PC-9 (cell line): ENCODE measurements at regions of chr9 and their contacts with region 1.

Region 1: GRCh38 chr9:108761655-108762347 is 94.0 kb downstream of the ACTL7B start:
- DNase-seq: peak in 1 of 2 experiments; percentile 56
- H3K4me3 ChIP-seq: no peak overlapping the region
- H3K27ac ChIP-seq: no peak overlapping the region
- H3K4me1 ChIP-seq: no peaks in the 10 kb centered on the region
- H3K27me3 ChIP-seq: no peaks in the 10 kb centered on the region
- CTCF ChIP-seq: peak; percentile 92

Region 2: DNA sequence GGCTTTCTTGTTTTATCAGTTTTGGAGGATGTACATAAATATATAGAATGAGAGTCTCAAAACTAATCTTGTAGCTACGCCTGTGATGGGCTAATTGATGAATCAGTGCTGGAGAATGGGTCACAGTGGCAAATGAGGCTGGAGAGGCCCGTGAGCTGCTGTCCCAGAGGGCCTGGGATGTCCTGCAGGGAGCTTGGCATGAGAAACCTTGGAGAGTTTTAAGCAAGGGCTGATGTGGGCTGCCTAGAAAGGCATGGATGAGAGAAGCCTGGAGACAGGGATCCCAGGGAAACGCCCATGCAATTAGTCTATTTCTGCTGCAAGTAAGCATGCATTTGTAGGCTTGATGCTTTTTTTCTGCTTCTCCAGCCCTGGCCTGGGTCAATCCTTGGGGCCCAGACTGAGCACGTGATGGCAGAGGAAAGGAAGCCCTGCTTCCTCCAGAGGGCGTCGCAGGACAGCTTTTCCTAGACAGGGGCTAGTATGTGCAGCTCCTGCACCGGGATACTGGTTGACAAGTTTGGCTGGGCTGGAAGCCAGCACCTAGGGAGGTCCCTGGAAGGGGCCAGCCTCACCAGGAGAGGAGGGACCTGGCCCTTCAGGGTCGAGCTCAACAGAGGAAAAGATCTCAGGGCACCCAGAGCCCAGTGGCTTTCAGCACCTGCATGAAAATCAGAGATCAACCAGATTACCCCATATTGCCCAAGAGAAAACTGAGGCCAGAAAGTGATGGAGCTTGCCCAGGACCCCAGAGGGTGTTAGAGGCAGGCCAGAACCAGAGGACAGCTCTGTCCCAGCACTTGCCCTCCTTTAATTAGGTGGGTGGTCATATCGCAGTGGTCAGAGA is 1339.6 kb before region 1 on chr9:
- CTCF ChIA-PET with region 1: interaction called, 4 read pairs
- POLR2A ChIA-PET with region 1: no interaction called
- intact Hi-C with region 1: loop called (anchors 1 kb)
- DNase-seq: peak; percentile 65 to 79
- H3K4me3 ChIP-seq: no peak overlapping the region
- H3K27ac ChIP-seq: no peak overlapping the region
- H3K4me1 ChIP-seq: no peaks in the 10 kb centered on the region
- H3K27me3 ChIP-seq: no peaks in the 10 kb centered on the region
- CTCF ChIP-seq: peak; percentile 88

Region 3: DNA sequence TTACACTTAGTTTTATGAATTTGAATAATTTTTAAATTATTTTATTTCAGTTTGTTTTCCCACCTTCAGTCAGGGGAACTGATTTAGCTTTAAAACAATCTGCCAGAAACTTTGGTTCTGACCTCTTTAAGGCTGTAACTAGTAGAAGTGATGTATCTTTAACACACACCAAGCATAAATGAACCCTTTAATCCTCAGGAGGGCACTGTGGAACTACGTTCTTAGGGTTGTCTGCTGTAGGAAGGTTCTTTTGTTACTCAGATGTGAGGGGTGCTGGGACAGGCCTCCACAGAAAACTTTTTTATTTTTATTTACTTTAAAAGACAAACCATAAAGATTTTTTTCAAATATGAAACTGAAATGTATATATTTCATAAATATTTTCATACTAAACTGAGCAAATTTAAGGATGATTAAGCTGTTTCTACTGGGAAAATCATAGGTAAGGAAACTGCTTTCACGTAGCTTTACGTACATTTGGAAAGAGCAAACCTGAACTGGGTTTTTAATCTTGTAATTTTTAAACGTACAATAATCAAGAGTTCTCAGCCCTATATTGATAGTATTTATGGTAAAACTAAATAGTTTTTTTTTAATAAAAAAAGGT is 1277.6 kb before region 1 on chr9:
- CTCF ChIA-PET with region 1: no interaction called
- POLR2A ChIA-PET with region 1: no interaction called
- intact Hi-C with region 1: loop called (anchors 1 kb)
- DNase-seq: peak; percentile 42 to 65
- H3K4me3 ChIP-seq: peak overlapping the region; percentile 100; the same call in 1 of the 2 replicates
- H3K27ac ChIP-seq: 0 out of 2 replicates have a peak overlapping the region, but pooled peaks have one; percentile 50
- H3K4me1 ChIP-seq: peaks cover 45% of the 10 kb centered on the region
- H3K27me3 ChIP-seq: no peaks in the 10 kb centered on the region
- CTCF ChIP-seq: peak; percentile 72

Region 4: GRCh38 chr9:108374626-108375025 is 387.2 kb before region 1 on chr9:
- CTCF ChIA-PET with region 1: no interaction called
- POLR2A ChIA-PET with region 1: no interaction called
- intact Hi-C with region 1: no loop called
- DNase-seq: peak in 1 of 2 experiments; percentile 57
- H3K4me3 ChIP-seq: no peak overlapping the region
- H3K27ac ChIP-seq: peak overlapping the region; percentile 38
- H3K4me1 ChIP-seq: peaks cover 20% of the 10 kb centered on the region
- H3K27me3 ChIP-seq: no peaks in the 10 kb centered on the region
- CTCF ChIP-seq: no peak

Region 5: DNA sequence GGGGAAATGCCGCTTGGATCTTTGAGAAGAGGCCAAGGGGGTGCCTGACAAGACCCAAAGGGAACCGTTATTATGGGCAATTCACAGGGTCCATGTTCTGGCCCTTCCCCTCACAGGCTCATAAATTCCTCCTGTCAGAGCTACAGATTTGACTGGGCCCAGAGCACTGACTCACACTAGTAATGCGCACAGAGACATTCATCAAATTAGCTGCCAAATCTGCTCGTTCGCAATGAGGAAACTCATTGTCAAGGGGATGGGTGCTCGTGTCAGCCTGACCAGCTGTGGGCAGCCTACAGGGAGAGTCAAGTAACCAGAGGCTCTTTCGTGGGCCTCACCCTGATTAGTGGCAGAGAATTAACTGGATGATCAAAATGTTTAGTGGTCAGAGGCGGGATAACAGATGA is 283.4 kb before region 1 on chr9:
- CTCF ChIA-PET with region 1: no interaction called
- POLR2A ChIA-PET with region 1: no interaction called
- intact Hi-C with region 1: loop called (anchors 10 kb)
- DNase-seq: peak; percentile 57 to 93
- H3K4me3 ChIP-seq: no peak overlapping the region
- H3K27ac ChIP-seq: peak overlapping the region; percentile 87
- H3K4me1 ChIP-seq: peaks cover 48% of the 10 kb centered on the region
- H3K27me3 ChIP-seq: no peaks in the 10 kb centered on the region
- CTCF ChIP-seq: no peak

Region 6: DNA sequence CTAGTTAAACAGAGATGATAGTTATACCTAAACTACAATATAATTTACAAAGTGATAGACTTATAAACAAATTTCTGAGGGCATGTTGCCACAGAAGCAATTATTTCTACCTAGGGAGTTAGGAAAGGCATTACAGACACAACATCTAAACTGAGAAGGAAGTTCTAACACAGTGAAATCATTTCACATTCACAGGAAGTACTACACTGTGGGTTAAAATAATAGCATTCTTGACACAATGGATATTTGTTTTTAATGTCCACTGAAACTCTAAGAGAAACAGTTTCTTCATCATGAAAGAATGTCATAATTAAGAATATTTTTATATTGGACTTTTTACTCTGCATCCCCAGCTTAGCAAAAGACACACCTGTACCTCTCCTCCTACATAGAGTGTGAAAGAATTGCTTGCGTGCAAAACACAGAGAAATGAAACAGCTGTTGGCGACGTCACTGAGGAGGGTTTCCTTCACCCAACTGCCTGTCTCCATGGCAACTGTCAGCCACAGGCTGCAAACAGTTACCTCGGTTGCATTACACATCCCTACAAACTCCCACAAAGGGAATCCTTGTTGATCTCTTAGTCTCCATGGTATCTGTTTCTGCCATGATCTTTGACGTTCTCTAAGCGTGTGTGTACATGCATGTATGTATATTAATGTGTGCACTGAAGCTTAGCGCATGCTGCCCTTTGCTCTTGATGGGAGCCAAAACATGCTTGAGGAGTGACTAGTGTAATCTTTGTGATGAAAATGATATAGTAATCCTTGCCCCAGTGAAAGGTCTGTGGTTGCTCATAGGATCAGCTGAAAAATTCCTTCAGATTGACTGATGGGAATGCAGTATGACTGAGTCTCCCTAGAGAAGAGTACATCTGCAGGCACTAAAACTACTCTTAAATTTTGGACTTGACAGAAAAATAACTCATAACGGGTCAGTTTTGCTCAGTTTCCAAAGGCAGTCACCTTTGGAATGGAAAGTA is 74.5 kb before region 1 on chr9:
- CTCF ChIA-PET with region 1: no interaction called
- POLR2A ChIA-PET with region 1: no interaction called
- intact Hi-C with region 1: loop called (anchors 5 kb)
- DNase-seq: no peak
- H3K4me3 ChIP-seq: no peak overlapping the region
- H3K27ac ChIP-seq: no peak overlapping the region
- H3K4me1 ChIP-seq: peaks cover 16% of the 10 kb centered on the region
- H3K27me3 ChIP-seq: no peaks in the 10 kb centered on the region
- CTCF ChIP-seq: no peak

Region 7: DNA sequence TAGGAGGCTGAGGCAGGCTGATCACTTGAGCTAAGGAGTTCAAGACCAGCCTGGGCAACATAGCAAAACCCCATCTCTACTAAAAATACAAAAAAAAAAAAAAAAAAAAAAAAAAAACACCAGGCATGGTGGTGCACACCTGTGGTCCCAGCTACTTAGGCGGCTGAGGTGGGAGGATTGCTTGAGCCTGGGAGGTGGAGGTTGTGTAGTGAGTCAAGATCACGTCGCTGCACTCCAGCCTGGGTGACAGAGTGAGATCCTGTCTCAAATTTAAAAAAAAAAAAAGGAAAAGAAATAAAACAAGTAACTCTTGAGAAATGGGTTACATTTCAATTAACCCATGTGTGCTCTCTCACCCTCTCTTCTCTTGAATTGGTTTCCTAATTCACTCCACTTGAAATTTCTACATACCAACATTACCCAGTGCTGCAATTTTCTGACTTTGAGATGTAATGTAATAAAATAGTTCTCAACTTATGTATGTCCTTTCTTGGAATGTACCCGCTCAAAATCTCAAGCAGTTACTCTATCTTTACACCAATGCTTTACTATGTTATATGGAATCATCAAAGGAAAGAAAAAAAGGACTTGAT is 322.1 kb after region 1 on chr9:
- CTCF ChIA-PET with region 1: no interaction called
- POLR2A ChIA-PET with region 1: no interaction called
- intact Hi-C with region 1: no loop called
- DNase-seq: no peak
- H3K4me3 ChIP-seq: no peak overlapping the region
- H3K27ac ChIP-seq: no peak overlapping the region
- H3K4me1 ChIP-seq: peaks cover 23% of the 10 kb centered on the region
- H3K27me3 ChIP-seq: no peaks in the 10 kb centered on the region
- CTCF ChIP-seq: no peak